ENCODE measurements at regions of chr11 and their contacts with region 1.

Region 1: GRCh38 chr11:3849297-3849874 is 6.1 kb upstream of the STIM1 start:
- DNase-seq: no peak
- ATAC-seq: peak; percentile 78
- H3K4me3 ChIP-seq: no peak overlapping the region
- H3K27ac ChIP-seq: no peak overlapping the region
- H3K4me1 ChIP-seq: no peaks in the 10 kb centered on the region
- H3K27me3 ChIP-seq: no peaks in the 10 kb centered on the region

Region 2: GRCh38 chr11:4072668-4073285 is 223.4 kb after region 1 on chr11:
- intact Hi-C with region 1: loop called (anchors 1 kb)
- DNase-seq: no peak
- ATAC-seq: peak; percentile 90
- H3K4me3 ChIP-seq: no peak overlapping the region
- H3K27ac ChIP-seq: no peak overlapping the region
- H3K4me1 ChIP-seq: no peaks in the 10 kb centered on the region
- H3K27me3 ChIP-seq: no peaks in the 10 kb centered on the region

Measured in aorta (tissue), 5 donors.